BJ (cell line): ENCODE measurements at regions of chr20 and their contacts with region 1.

Region 1: DNA sequence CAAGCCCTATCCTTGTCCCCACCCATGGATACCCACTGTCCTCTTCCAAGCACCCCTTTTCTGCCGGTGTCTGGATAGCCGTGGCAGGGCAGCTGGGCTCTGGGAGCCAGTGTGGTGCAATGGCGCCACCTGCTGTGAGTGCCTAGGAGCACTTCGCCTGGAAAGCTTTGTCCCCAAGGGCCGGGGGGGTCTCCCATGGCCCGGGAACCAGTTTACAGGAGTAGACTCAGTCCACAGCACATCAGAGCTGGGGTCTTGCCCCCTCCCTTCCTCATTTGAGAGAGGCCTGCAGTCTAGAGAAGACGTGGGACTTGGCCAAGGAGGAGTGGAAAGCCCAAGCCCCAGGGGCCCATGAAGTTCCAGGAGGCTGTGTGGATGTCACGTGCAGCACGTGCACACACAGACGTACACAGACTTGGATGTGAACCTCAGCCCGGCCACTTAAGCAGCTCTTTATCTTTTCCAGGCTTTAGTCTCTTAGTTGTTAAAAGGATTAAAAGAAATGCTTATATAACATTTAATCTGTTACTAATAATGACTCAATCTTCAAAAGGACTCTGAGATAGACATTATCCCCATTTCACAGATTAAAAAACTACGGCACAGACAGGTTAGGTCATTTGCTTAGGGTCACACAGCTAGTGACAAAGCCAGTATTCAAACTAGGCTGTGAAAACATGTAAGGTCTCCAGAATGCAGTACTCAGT is 40.9 kb upstream of the CDH22 start:
- DNase-seq: no peak
- H3K4me3 ChIP-seq: no peak overlapping the region
- H3K27me3 ChIP-seq: peaks cover under 1% of the 10 kb centered on the region
- CTCF ChIP-seq: peak; percentile 80

Region 2: GRCh38 chr20:45987108-45987780 is 361.9 kb before region 1 on chr20:
- CTCF ChIA-PET with region 1: interaction called, 10 read pairs
- POLR2A ChIA-PET with region 1: no interaction called
- DNase-seq: no peak
- H3K4me3 ChIP-seq: no peak overlapping the region
- H3K27me3 ChIP-seq: peaks cover 2% of the 10 kb centered on the region
- CTCF ChIP-seq: peak; percentile 89

Region 3: GRCh38 chr20:46022411-46023147 is 326.6 kb before region 1 on chr20:
- CTCF ChIA-PET with region 1: interaction called, 10 read pairs
- POLR2A ChIA-PET with region 1: no interaction called
- DNase-seq: no peak
- H3K4me3 ChIP-seq: peak overlapping the region; percentile 20; the same call in 1 of the 2 replicates
- H3K27me3 ChIP-seq: peaks cover 11% of the 10 kb centered on the region
- CTCF ChIP-seq: peak; percentile 81

Region 4: GRCh38 chr20:46243707-46244628 is 105.2 kb before region 1 on chr20:
- CTCF ChIA-PET with region 1: no interaction called
- POLR2A ChIA-PET with region 1: no interaction called
- DNase-seq: no peak
- H3K4me3 ChIP-seq: no peak overlapping the region
- H3K27me3 ChIP-seq: peaks cover 14% of the 10 kb centered on the region
- CTCF ChIP-seq: no peak

Region 5: GRCh38 chr20:46307139-46307998 is 41.8 kb before region 1 on chr20:
- CTCF ChIA-PET with region 1: interaction called, 35 read pairs
- POLR2A ChIA-PET with region 1: no interaction called
- DNase-seq: no peak
- H3K4me3 ChIP-seq: no peak overlapping the region
- H3K27me3 ChIP-seq: peaks cover 43% of the 10 kb centered on the region
- CTCF ChIP-seq: peak; percentile 89

Region 6: GRCh38 chr20:46333161-46333991 is 15.8 kb before region 1 on chr20:
- CTCF ChIA-PET with region 1: interaction called, 25 read pairs
- POLR2A ChIA-PET with region 1: no interaction called
- DNase-seq: no peak
- H3K4me3 ChIP-seq: no peak overlapping the region
- H3K27me3 ChIP-seq: peaks cover 40% of the 10 kb centered on the region
- CTCF ChIP-seq: no peak